GM23248 (cell line): ENCODE measurements at regions of chr2 and their contacts with region 1.

Region 1: GRCh38 chr2:176079831-176080539 is 3.8 kb downstream of the EVX2 start:
- DNase-seq: peak; percentile 91
- H3K4me3 ChIP-seq: peak overlapping the region; percentile 63
- H3K27ac ChIP-seq: no peak overlapping the region
- H3K4me1 ChIP-seq: no peaks in the 10 kb centered on the region
- H3K27me3 ChIP-seq: peaks cover 91% of the 10 kb centered on the region

Region 2: GRCh38 chr2:175366815-175367214 is 713.2 kb before region 1 on chr2:
- in situ Hi-C with region 1: loop called (anchors 10 kb)
- DNase-seq: peak; percentile 75
- H3K4me3 ChIP-seq: no peak overlapping the region
- H3K27ac ChIP-seq: no peak overlapping the region
- H3K4me1 ChIP-seq: no peaks in the 10 kb centered on the region
- H3K27me3 ChIP-seq: no peaks in the 10 kb centered on the region; the same call in 1 of the 2 replicates

Region 3: DNA sequence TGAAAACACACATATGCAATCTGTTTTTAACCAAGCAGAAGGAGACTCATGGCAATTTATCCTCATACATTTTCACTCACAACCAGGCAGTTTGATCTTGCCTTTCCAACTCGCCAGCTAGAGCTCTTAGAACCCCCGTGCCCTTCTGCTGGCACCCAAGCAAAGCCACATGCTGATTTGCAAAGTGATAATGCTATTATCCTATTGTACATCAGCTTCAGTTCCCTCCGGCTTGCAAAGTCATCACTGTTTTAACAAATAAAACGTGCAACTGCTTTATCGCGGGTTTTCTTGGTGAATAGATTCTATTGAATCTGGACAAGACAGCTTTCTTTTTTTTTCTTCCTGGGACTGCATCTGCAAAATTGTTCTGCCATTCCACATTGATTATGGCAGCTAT is 392.5 kb before region 1 on chr2:
- in situ Hi-C with region 1: loop called (anchors 5 kb)
- DNase-seq: no peak
- H3K4me3 ChIP-seq: no peak overlapping the region
- H3K27ac ChIP-seq: no peak overlapping the region
- H3K4me1 ChIP-seq: peaks cover 6% of the 10 kb centered on the region; the same call in 1 of the 2 replicates
- H3K27me3 ChIP-seq: peaks cover 26% of the 10 kb centered on the region; the same call in 1 of the 2 replicates

Region 4: DNA sequence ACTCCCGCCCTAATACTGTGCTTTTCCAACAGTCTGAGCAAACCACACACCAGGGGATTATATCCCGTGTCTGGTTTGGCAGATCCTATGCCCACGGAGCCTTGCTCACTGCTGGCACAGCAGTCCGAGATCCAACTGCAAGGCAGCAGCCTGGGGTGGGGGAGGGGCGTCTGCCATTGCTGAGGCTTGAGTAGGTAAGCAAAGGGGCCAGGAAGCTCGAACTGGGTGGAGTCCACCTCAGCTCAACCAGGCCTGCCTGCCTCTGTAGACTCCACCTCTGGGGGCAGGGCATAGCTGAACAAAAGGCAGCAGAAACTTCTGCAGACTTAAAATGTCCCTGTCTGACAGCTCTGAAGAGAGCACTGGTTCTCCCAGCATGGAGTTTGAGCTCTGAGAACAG is 122.1 kb before region 1 on chr2:
- in situ Hi-C with region 1: no loop called
- DNase-seq: no peak
- H3K4me3 ChIP-seq: no peak overlapping the region
- H3K27ac ChIP-seq: no peak overlapping the region
- H3K4me1 ChIP-seq: no peaks in the 10 kb centered on the region
- H3K27me3 ChIP-seq: no peaks in the 10 kb centered on the region